ENCODE measurements at regions of chr15 and their contacts with region 1.

Region 1: GRCh38 chr15:40421246-40422157 is 15.9 kb downstream of the IVD start:
- DNase-seq: peak; percentile 79 to 87
- H3K4me3 ChIP-seq: peak overlapping the region; percentile 35
- H3K4me3 Mint-ChIP-seq: peak overlapping the region; percentile 9
- H3K27ac Mint-ChIP-seq: no peak overlapping the region
- H3K4me1 ChIP-seq: peaks cover 5% of the 10 kb centered on the region; the same call in 1 of the 2 replicates
- H3K4me1 Mint-ChIP-seq: no peaks in the 10 kb centered on the region
- H3K27me3 ChIP-seq: no peaks in the 10 kb centered on the region
- H3K27me3 Mint-ChIP-seq: no peaks in the 10 kb centered on the region
- CTCF ChIP-seq: peak; percentile 95 to 96

Region 2: DNA sequence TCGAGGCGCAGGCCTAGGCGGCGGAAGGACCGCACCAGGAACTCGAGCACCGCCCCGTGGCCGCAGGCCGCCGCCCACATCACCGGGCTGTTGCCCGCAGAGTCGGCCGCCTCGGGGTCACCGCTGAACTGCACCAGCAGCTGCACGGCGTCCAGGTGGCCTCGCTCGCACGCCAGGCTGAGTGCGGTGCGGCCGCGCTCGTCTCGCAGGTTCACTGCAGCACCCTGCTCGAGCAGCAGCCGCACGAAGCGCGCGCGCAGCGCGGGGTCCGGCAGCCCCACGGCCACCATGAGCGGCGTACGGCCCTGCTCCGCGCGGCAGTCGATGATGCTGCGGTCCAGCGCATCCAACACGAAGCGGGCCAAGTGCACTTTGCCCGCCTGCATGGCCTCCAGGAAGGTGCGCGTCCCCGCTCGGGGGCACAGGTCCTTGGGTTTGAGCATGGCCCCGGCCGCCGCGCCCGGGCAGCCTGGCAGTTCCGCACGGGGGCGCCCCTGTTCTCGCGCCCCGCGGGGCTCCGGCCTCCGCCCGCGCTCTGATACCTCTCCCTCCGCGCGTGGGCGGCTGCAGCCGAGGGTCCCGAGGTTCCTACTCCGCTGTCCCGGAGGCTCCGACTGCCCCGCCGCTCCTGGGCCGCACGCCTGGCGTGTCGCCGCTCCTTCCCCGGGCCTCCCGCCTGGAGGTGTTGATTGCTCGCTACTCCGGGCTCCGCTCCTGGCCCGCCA is 139.2 kb before region 1 on chr15:
- CTCF ChIA-PET with region 1: interaction called, 10 read pairs
- POLR2A ChIA-PET with region 1: no interaction called
- intact Hi-C with region 1: loop called (anchors 1 kb)
- DNase-seq: peak; percentile 71 to 74
- H3K4me3 ChIP-seq: peak overlapping the region; percentile 63
- H3K4me3 Mint-ChIP-seq: peak overlapping the region; percentile 72
- H3K27ac Mint-ChIP-seq: no peak overlapping the region
- H3K4me1 ChIP-seq: no peaks in the 10 kb centered on the region; the same call in 1 of the 2 replicates
- H3K4me1 Mint-ChIP-seq: no peaks in the 10 kb centered on the region
- H3K27me3 ChIP-seq: no peaks in the 10 kb centered on the region
- H3K27me3 Mint-ChIP-seq: no peaks in the 10 kb centered on the region
- CTCF ChIP-seq: no peak

Region 3: GRCh38 chr15:40338041-40338657 is 83.4 kb before region 1 on chr15:
- CTCF ChIA-PET with region 1: interaction called, 6 read pairs
- POLR2A ChIA-PET with region 1: no interaction called
- intact Hi-C with region 1: loop called (anchors 1 kb)
- DNase-seq: peak; percentile 84 to 87
- H3K4me3 ChIP-seq: no peak overlapping the region
- H3K4me3 Mint-ChIP-seq: no peak overlapping the region
- H3K27ac Mint-ChIP-seq: no peak overlapping the region
- H3K4me1 ChIP-seq: peaks cover 22% of the 10 kb centered on the region
- H3K4me1 Mint-ChIP-seq: peaks cover 26% of the 10 kb centered on the region
- H3K27me3 ChIP-seq: no peaks in the 10 kb centered on the region
- H3K27me3 Mint-ChIP-seq: no peaks in the 10 kb centered on the region
- CTCF ChIP-seq: peak; percentile 91 to 95